T-cell (primary cell): ENCODE measurements at regions of chr14 and their contacts with region 1.

Region 1: GRCh38 chr14:55756078-55756477 is 176.1 kb downstream of the KTN1 start:
- DNase-seq: no peak
- ATAC-seq: no peak
- H3K4me3 ChIP-seq: no peak overlapping the region
- H3K4me3 Mint-ChIP-seq: no peak overlapping the region
- H3K27ac ChIP-seq: no peak overlapping the region
- H3K27ac Mint-ChIP-seq: no peak overlapping the region
- H3K4me1 ChIP-seq: no peaks in the 10 kb centered on the region
- H3K4me1 Mint-ChIP-seq: no peaks in the 10 kb centered on the region
- H3K27me3 ChIP-seq: no peaks in the 10 kb centered on the region
- H3K27me3 Mint-ChIP-seq: peaks cover 0 to 2% of the 10 kb centered on the region in 2 donors

Region 2: GRCh38 chr14:55645145-55645544 is 110.9 kb before region 1 on chr14:
- CTCF ChIA-PET with region 1: no interaction called
- POLR2A ChIA-PET with region 1: no interaction called
- DNase-seq: no peak
- ATAC-seq: no peak
- H3K4me3 ChIP-seq: no peak overlapping the region
- H3K4me3 Mint-ChIP-seq: no peak overlapping the region
- H3K27ac ChIP-seq: no peak overlapping the region
- H3K27ac Mint-ChIP-seq: peak overlapping the region in 1 of 2 donors; percentile 35
- H3K4me1 ChIP-seq: no peaks in the 10 kb centered on the region
- H3K4me1 Mint-ChIP-seq: peaks cover 4 to 8% (median 5%) of the 10 kb centered on the region in 3 donors
- H3K27me3 ChIP-seq: no peaks in the 10 kb centered on the region
- H3K27me3 Mint-ChIP-seq: no peaks in the 10 kb centered on the region

Region 3: GRCh38 chr14:55780156-55780946 is 24.3 kb after region 1 on chr14:
- CTCF ChIA-PET with region 1: no interaction called
- POLR2A ChIA-PET with region 1: interaction called in 1 of 2 experiments, 10 read pairs
- DNase-seq: no peak
- ATAC-seq: no peak
- H3K4me3 ChIP-seq: no peak overlapping the region
- H3K4me3 Mint-ChIP-seq: no peak overlapping the region
- H3K27ac ChIP-seq: no peak overlapping the region
- H3K27ac Mint-ChIP-seq: no peak overlapping the region
- H3K4me1 ChIP-seq: no peaks in the 10 kb centered on the region
- H3K4me1 Mint-ChIP-seq: no peaks in the 10 kb centered on the region
- H3K27me3 ChIP-seq: peaks cover 0 to 3% of the 10 kb centered on the region in 2 experiments
- H3K27me3 Mint-ChIP-seq: peaks cover 0 to 5% of the 10 kb centered on the region in 2 donors

Region 4: DNA sequence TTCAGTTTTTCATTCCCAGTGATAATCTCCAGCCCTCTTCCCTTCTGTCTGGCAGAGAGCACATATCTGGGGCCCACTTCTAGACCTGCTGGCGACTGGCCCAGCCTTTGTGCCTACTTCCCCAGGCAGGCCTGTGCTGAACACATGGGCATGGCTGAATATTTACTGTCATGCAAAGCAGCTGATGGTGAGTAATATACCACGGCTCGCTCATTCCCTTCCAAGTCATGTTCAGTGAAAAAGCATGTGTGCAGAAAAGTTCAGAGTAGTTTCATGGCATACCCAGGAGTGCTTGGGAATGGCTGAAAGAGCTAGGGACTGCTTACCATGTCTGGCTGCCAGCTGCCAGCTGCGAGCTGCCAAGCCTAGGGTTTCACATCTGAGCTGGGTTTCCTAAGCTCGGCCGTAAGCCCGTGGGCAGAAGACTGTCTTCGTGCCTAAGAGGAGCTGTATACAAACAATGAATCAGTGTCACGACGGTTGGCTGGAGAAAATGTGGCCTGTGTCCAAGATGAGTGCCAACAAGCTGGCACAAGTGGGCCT is 182.2 kb after region 1 on chr14:
- CTCF ChIA-PET with region 1: no interaction called
- POLR2A ChIA-PET with region 1: no interaction called
- DNase-seq: no peak
- ATAC-seq: no peak
- H3K4me3 ChIP-seq: no peak overlapping the region
- H3K4me3 Mint-ChIP-seq: no peak overlapping the region
- H3K27ac ChIP-seq: no peak overlapping the region
- H3K27ac Mint-ChIP-seq: no peak overlapping the region
- H3K4me1 ChIP-seq: no peaks in the 10 kb centered on the region
- H3K4me1 Mint-ChIP-seq: no peaks in the 10 kb centered on the region
- H3K27me3 ChIP-seq: peaks cover 0 to 8% of the 10 kb centered on the region in 2 experiments
- H3K27me3 Mint-ChIP-seq: peaks cover 4 to 15% of the 10 kb centered on the region in 2 donors